B cell (primary cell): ENCODE measurements at regions of chr7 and their contacts with region 1.

Region 1: DNA sequence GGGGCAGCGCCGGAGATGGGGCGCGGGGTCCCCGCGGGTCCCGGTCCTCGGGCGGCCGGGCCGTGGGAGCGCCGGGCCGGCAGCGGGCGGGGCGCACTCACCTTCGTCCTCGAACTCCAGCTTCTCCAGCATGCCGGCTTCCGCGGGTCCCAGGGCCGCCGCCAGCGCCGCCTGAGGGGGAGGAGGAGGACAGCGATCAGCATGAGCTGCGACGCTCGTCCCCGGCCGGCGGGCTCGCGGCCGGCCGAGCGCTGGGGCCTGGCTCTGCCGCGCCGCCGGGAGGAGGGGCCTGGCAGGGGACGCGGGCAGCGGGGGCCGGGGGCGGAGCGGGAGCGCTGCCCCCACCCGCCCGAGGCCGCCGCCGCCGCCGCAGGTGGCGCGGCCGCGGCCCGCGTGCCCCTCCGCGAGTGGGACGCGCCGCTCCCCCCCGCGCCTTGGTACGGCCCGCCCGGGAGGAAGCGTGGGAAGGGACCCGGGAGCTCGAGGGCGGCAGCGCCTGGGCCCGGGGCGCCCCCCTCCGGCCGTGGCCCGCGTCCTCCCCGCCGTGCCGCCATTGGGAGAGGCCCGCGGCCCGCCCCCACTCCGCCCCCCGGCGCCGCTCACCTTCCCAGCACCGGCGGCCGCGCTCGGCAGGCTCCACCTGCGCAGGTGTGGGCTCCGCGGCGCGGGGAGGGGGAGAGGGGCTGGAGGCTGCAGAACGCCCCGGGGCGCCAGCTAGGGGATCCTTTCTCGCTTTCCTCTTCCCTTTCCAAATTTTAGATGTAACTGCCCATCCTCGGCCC is 112.5 kb upstream of the RHEB start:
- DNase-seq: peak; percentile 92
- ATAC-seq: peak; percentile 81
- H3K4me3 ChIP-seq: peak overlapping the region; percentile 66 to 76 (median 74)
- H3K4me3 Mint-ChIP-seq: peak overlapping the region; percentile 100
- H3K27ac ChIP-seq: peak overlapping the region; percentile 81
- H3K27ac Mint-ChIP-seq: peak overlapping the region; percentile 99
- H3K4me1 ChIP-seq: peaks cover 11 to 12% of the 10 kb centered on the region in 2 donors
- H3K4me1 Mint-ChIP-seq: peaks cover 17% of the 10 kb centered on the region
- H3K27me3 ChIP-seq: no peaks in the 10 kb centered on the region
- H3K27me3 Mint-ChIP-seq: no peaks in the 10 kb centered on the region
- CTCF ChIP-seq: peak; percentile 35

Region 2: DNA sequence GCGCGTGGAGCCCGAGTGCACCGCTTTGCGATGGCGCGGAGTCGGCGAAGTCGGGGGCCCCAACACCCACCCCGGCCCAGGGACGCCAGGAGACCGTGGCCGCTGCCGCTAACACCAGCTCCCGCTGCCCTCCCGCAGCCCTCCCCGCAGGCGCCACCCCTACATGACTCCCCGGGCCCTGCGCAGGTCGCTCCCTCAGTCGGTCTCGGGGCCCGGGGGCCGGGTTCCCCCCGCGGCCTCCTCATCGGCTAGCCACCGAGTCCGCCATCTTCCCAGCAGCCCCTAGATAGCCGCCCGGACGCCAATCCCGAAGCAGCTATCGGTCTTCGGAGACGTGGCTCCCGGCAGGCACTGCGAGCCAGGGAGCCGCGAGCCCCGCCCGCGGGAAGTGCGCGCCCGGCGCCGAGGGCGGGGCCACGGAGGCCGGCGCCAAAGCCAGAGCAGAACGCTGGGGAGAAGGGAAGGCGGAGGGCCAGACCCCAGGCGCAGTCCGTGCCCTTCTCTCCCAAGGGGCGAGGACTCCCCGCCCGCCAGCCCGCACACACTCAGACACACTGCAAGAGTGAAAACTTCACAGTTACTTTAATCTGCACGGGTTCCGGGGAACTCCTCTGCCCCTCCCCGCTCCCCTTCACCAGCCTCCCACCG is 551.5 kb before region 1 on chr7 and contains the start of gene FASTK:
- CTCF ChIA-PET with region 1: no interaction called
- POLR2A ChIA-PET with region 1: no interaction called
- intact Hi-C with region 1: loop called (anchors 5 kb)
- DNase-seq: peak; percentile 90
- ATAC-seq: peak; percentile 82
- H3K4me3 ChIP-seq: peak within 1 kb of the TSS; percentile 58 to 92 (median 89)
- H3K4me3 Mint-ChIP-seq: peak within 1 kb of the TSS; percentile 87
- H3K27ac ChIP-seq: peak within 1 kb of the TSS; percentile 68 to 92
- H3K27ac Mint-ChIP-seq: peak within 1 kb of the TSS; percentile 88
- H3K4me1 ChIP-seq: peaks cover 42 to 52% of the 10 kb centered on the region in 2 donors
- H3K4me1 Mint-ChIP-seq: peaks cover 52% of the 10 kb centered on the region
- H3K27me3 ChIP-seq: peaks cover 0 to 20% (median 8%) of the 10 kb centered on the region in 4 experiments
- H3K27me3 Mint-ChIP-seq: peaks cover 11% of the 10 kb centered on the region
- CTCF ChIP-seq: no peak
- total RNA-seq, gene FASTK: 119 and 120 TPM in 2 replicates

Region 3: GRCh38 chr7:151519765-151520418 is 112.3 kb before region 1 on chr7 and contains the start of gene RHEB:
- CTCF ChIA-PET with region 1: interaction called, 15 read pairs
- POLR2A ChIA-PET with region 1: interaction called, 14 read pairs
- intact Hi-C with region 1: loop called (anchors 1 kb)
- DNase-seq: peak; percentile 99
- ATAC-seq: peak; percentile 81
- H3K4me3 ChIP-seq: peak within 1 kb of the TSS; percentile 63 to 79 (median 74)
- H3K4me3 Mint-ChIP-seq: peak within 1 kb of the TSS; percentile 82
- H3K27ac ChIP-seq: peak within 1 kb of the TSS; percentile 78 to 93
- H3K27ac Mint-ChIP-seq: peak within 1 kb of the TSS; percentile 95
- H3K4me1 ChIP-seq: peaks cover 18 to 27% of the 10 kb centered on the region in 2 donors
- H3K4me1 Mint-ChIP-seq: peaks cover 37% of the 10 kb centered on the region
- H3K27me3 ChIP-seq: peaks cover 0 to 4% (median 2%) of the 10 kb centered on the region in 4 experiments
- H3K27me3 Mint-ChIP-seq: peaks cover 3% of the 10 kb centered on the region
- CTCF ChIP-seq: no peak
- total RNA-seq, gene RHEB: 32.0 and 40.3 TPM in 2 replicates

Region 4: DNA sequence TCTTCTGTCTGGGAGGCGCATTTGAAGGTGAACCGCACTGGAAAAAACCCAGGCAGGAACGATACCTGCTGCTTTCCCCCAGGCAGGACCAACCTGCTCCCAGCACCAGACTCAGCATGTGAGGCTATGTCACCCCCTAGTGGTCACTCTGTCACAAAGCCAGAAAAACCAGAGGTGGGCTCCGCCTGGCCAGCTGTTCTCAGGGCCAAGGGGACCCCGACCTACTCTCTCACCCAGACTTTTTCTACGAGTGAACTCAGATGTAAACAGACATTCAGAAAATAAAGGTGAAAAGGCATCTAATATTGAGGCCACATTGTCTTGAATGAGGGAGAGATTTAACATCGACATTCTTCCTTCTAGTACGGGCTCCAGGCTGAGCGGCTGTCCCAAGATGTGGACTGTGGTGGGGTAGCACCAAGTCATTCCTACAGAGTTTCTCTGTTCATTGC is 127.5 kb after region 1 on chr7:
- CTCF ChIA-PET with region 1: interaction called, 20 read pairs
- POLR2A ChIA-PET with region 1: no interaction called
- intact Hi-C with region 1: no loop called
- DNase-seq: peak; percentile 69
- ATAC-seq: peak; percentile 70
- H3K4me3 ChIP-seq: no peak overlapping the region
- H3K4me3 Mint-ChIP-seq: no peak overlapping the region
- H3K27ac ChIP-seq: no peak overlapping the region
- H3K27ac Mint-ChIP-seq: peak overlapping the region; percentile 53
- H3K4me1 ChIP-seq: peaks cover 0 to 7% of the 10 kb centered on the region in 2 donors
- H3K4me1 Mint-ChIP-seq: peaks cover 16% of the 10 kb centered on the region
- H3K27me3 ChIP-seq: no peaks in the 10 kb centered on the region
- H3K27me3 Mint-ChIP-seq: no peaks in the 10 kb centered on the region
- CTCF ChIP-seq: peak; percentile 86

Region 5: GRCh38 chr7:151775547-151776443 is 143.6 kb after region 1 on chr7:
- CTCF ChIA-PET with region 1: no interaction called
- POLR2A ChIA-PET with region 1: no interaction called
- intact Hi-C with region 1: no loop called
- DNase-seq: no peak
- ATAC-seq: no peak
- H3K4me3 ChIP-seq: no peak overlapping the region
- H3K4me3 Mint-ChIP-seq: no peak overlapping the region
- H3K27ac ChIP-seq: no peak overlapping the region
- H3K27ac Mint-ChIP-seq: no peak overlapping the region
- H3K4me1 ChIP-seq: no peaks in the 10 kb centered on the region
- H3K4me1 Mint-ChIP-seq: no peaks in the 10 kb centered on the region
- H3K27me3 ChIP-seq: no peaks in the 10 kb centered on the region
- H3K27me3 Mint-ChIP-seq: no peaks in the 10 kb centered on the region
- CTCF ChIP-seq: no peak

Region 6: GRCh38 chr7:151936207-151936606 is 304.0 kb after region 1 on chr7:
- CTCF ChIA-PET with region 1: no interaction called
- POLR2A ChIA-PET with region 1: no interaction called
- intact Hi-C with region 1: loop called (anchors 2 kb)
- DNase-seq: peak; percentile 82
- ATAC-seq: peak; percentile 81
- H3K4me3 ChIP-seq: peak overlapping the region in 3 of 5 experiments; percentile 6 to 48 (median 38)
- H3K4me3 Mint-ChIP-seq: peak overlapping the region; percentile 94
- H3K27ac ChIP-seq: peak overlapping the region; percentile 70 to 82
- H3K27ac Mint-ChIP-seq: peak overlapping the region; percentile 99
- H3K4me1 ChIP-seq: peaks cover 33 to 37% of the 10 kb centered on the region in 2 donors
- H3K4me1 Mint-ChIP-seq: peaks cover 39% of the 10 kb centered on the region
- H3K27me3 ChIP-seq: no peaks in the 10 kb centered on the region
- H3K27me3 Mint-ChIP-seq: peaks cover 4% of the 10 kb centered on the region
- CTCF ChIP-seq: no peak

Region 7: DNA sequence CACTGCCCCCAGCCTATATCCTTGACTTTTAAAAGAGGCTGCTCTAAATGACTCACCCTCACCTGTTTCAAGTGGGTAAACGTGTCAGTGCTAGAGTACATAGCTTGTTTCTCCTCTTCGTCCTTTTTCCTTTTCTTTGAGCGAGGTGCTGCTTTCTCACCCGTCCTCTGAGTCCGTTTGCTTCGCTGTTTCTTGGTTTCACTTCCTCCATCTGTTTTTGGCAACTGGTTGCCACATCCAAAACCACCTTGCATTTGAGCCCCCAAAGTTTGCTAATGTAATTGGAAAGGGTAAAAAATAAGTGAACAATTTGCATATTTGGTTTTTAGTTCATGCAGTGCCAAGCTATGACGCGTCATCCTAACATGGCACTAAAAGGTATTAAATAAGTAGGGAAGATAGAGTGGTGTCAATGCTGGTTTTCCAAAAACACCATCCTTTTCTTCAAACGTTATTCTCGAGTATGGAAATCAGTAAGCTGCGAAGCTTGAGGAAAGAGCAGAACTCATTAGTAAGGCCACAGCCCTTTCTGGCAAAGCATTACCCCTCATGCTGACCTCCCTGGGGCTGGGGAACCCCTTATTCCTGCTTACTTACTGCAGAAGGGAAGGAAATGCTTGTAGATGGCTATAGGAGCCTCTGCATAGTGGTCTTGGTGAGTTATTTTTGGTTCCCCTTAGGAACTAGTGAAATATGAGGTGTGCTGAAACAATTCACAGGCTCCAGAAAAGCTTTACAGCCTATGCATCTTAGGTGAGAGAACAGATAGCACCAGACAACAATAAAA is 526.8 kb after region 1 on chr7:
- CTCF ChIA-PET with region 1: no interaction called
- POLR2A ChIA-PET with region 1: no interaction called
- intact Hi-C with region 1: loop called (anchors 5 kb)
- DNase-seq: peak; percentile 86
- ATAC-seq: peak; percentile 90
- H3K4me3 ChIP-seq: peak overlapping the region in 3 of 5 experiments; percentile 18 to 48 (median 36)
- H3K4me3 Mint-ChIP-seq: peak overlapping the region; percentile 67
- H3K27ac ChIP-seq: peak overlapping the region; percentile 86 to 87
- H3K27ac Mint-ChIP-seq: peak overlapping the region; percentile 89
- H3K4me1 ChIP-seq: peaks cover 29 to 31% of the 10 kb centered on the region in 2 donors
- H3K4me1 Mint-ChIP-seq: peaks cover 40% of the 10 kb centered on the region
- H3K27me3 ChIP-seq: no peaks in the 10 kb centered on the region
- H3K27me3 Mint-ChIP-seq: no peaks in the 10 kb centered on the region
- CTCF ChIP-seq: no peak